ENCODE measurements at regions of chr3 and their contacts with region 1.

Region 1: DNA sequence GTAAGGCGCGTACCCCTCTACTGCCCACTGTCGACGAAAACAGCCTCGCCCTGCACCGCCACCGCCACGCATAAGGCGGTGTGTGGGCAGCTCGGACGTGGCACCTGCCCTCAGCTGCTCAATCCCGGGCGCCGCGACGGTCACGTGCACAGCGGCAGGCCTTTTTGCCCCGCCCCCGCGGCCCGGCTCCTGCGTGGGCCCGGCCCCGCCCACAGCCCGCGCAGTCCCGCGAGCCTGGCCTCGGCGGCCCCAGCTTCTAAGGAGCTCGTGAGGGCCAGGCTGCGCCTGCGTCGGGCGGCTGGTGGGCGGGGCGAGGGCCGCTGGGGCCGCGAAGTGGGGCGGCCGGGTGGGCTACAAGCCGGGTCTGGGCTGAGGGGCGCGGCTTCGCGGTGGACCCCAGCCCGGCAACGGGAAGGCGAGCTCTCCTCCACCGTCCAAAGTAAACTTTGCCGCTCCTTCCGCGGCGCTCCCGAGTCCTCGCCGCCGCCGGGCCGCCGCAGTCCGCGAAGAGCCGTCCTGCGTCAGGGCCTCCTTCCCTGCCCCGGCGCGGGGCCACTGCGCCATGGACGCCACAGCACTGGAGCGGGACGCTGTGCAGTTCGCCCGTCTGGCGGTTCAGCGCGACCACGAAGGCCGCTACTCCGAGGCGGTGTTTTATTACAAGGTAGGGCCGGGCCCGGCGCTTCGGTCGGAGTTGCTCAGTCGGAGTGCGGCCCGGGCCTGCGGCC is at the start of gene CAPN7:
- DNase-seq: peak; percentile 93 to 98 (median 96)
- ATAC-seq: peak; percentile 90 to 97 (median 96)
- H3K4me3 ChIP-seq: peak within 1 kb of the TSS; percentile 84 to 95 (median 90)
- H3K27ac ChIP-seq: peak within 1 kb of the TSS; percentile 95 to 99 (median 98)
- H3K4me1 ChIP-seq: peaks cover 0 to 19% (median 16%) of the 10 kb centered on the region in 3 donors
- H3K27me3 ChIP-seq: no peaks in the 10 kb centered on the region
- CTCF ChIP-seq: peak in 2 of 4 donors; percentile 16 to 34
- total RNA-seq, gene CAPN7: 15.7 to 23.9 (median 19.5) TPM

Region 2: DNA sequence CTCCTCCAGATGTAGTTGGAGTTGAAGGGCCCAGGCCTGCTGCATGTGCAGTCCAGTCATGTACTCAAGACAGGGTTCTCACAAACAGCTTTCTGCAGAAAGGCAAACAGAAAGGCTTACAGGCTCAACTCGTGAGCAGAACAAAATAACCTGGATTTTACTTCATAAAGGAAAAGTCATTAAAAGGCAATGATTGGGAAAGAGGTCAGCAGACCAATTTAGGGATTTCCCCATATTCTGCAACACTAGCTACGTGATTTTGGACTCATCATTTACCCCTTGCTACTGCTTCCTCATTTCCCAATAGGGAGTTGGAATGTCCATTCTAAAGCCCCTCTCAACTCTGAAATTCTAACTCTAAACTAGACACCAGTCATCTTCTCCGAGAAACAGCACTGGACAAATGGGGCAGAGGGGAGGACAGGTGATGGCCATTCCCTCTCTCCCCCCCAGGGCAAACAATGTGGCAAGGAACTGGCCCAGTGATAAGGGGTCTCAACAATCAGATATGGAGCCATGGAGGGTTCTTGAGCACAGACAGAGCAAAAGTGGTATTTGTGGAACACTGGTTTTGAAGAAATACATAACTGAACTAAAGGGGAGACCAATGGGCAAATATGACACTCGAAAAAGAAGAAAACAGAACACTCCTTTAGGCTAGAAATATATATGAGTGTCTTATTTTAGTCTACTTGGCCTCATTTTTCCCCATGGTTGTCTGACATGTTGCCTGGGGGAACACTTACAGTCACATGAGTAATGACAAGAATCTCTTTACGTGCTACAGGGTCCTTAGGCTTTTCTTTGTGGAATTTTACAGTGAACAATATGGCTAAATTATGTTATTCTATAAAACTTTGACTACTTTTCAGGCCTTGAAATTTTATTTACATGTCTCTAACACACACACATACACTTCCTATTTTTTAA is 203.4 kb after region 1 on chr3:
- intact Hi-C with region 1: loop called in 1 of 3 experiments (anchors 10 kb)
- DNase-seq: no peak
- ATAC-seq: peak in 1 of 4 donors; percentile 23
- H3K4me3 ChIP-seq: no peak overlapping the region
- H3K27ac ChIP-seq: no peak overlapping the region
- H3K4me1 ChIP-seq: no peaks in the 10 kb centered on the region
- H3K27me3 ChIP-seq: no peaks in the 10 kb centered on the region
- CTCF ChIP-seq: no peak

Measured in pancreas (tissue), 10 donors.